ENCODE measurements at regions of chr2 and their contacts with region 1.

Region 1: DNA sequence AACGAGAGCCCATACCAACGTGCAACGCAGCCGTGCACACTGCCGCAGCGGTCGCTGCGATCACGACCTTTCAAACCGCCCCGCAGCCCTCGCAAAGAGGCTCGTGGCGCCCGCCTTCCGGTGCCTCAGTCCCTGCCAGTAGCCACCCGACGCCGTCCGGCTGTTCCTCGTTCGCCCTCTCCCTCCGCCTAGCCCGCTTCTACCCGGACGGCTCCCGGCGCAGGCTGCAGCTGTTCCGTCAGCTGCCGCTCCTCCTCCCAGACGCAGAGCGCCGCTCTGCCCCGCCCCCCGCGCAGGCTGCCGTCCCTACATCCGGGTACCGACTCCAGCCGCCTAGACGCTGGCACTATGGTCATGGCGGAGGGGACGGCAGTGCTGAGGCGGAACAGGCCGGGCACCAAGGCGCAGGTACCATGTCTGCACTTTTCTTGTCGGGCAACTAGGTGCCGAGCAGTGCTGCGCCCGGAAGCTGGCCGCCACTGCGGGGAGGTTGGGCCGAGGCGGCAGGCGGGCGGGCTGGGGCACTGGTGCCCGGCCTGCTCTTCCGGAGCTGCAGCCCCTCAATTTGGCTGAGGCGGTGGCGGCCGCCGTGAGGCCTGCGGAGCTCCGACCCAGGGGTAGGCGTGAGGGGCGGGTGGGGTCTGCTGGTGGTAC is at the start of gene MOB4:
- DNase-seq: peak; percentile 99
- H3K4me3 Mint-ChIP-seq: peak within 1 kb of the TSS; percentile 94
- H3K27ac Mint-ChIP-seq: peak within 1 kb of the TSS; percentile 91
- H3K4me1 Mint-ChIP-seq: peaks cover 21% of the 10 kb centered on the region
- H3K27me3 Mint-ChIP-seq: no peaks in the 10 kb centered on the region
- total RNA-seq, gene MOB4: 19.2 and 22.6 TPM in 2 replicates

Region 2: DNA sequence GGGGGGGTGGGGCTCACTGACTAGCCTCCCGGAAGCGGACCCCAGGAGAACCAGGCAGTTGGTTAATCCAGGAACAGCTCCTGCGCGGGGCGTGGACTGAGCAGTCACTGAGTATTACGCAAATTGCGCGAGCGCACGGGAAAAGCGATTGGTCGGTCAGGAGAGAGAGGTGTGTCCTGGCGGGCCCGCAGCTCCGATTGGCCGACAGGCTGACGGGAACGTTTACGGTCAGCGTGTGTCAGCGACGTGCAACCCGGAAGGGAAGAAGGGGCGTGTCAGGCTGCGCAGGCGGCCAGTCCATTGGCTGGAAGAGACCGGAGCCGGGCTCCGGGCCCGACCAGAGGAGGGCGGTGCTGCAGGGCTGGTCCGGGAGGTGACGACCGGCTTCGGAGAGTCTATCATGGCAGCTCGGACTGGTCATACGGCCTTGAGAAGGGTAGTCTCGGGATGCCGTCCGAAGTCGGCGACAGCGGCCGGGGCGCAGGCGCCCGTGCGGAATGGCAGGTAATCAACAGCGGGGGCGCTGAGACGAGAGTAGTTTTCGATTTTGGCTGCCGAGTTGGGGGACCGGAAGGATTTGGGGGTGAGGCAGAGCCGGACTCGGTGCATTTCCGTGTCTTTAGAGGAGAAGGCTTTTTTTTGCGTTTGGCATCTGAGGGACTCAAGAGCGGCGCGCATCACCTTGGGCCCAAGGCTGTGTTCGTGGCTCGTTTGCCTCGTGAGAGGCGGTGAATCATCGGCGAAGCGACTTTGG is 62.5 kb before region 1 on chr2 and contains the start of gene COQ10B:
- intact Hi-C with region 1: loop called (anchors 1 kb)
- DNase-seq: peak; percentile 100
- H3K4me3 Mint-ChIP-seq: peak within 1 kb of the TSS; percentile 100
- H3K27ac Mint-ChIP-seq: peak within 1 kb of the TSS; percentile 100
- H3K4me1 Mint-ChIP-seq: peaks cover 26% of the 10 kb centered on the region
- H3K27me3 Mint-ChIP-seq: no peaks in the 10 kb centered on the region
- total RNA-seq, gene COQ10B: 20.1 TPM in 2 replicates

Region 3: GRCh38 chr2:197499594-197500526 is 16.0 kb before region 1 on chr2 and contains the starts of genes HSPD1 and HSPE1:
- intact Hi-C with region 1: loop called (anchors 1 kb)
- DNase-seq: peak; percentile 99
- H3K4me3 Mint-ChIP-seq: peak within 1 kb of the TSS; percentile 95
- H3K27ac Mint-ChIP-seq: peak within 1 kb of the TSS; percentile 98
- H3K4me1 Mint-ChIP-seq: peaks cover 41% of the 10 kb centered on the region
- H3K27me3 Mint-ChIP-seq: no peaks in the 10 kb centered on the region
- total RNA-seq, gene HSPD1: 984 and 999 TPM in 2 replicates
- total RNA-seq, gene HSPE1: 409 and 411 TPM in 2 replicates

Region 4: GRCh38 chr2:197538412-197538811 is 22.5 kb after region 1 on chr2:
- intact Hi-C with region 1: loop called (anchors 2 kb)
- DNase-seq: no peak
- H3K4me3 Mint-ChIP-seq: no peak overlapping the region
- H3K27ac Mint-ChIP-seq: no peak overlapping the region
- H3K4me1 Mint-ChIP-seq: peaks cover 17% of the 10 kb centered on the region
- H3K27me3 Mint-ChIP-seq: no peaks in the 10 kb centered on the region

Region 5: GRCh38 chr2:197777823-197778407 is 262.0 kb after region 1 on chr2:
- intact Hi-C with region 1: loop called (anchors 10 kb)
- DNase-seq: peak; percentile 77
- H3K4me3 Mint-ChIP-seq: no peak overlapping the region
- H3K27ac Mint-ChIP-seq: no peak overlapping the region
- H3K4me1 Mint-ChIP-seq: no peaks in the 10 kb centered on the region
- H3K27me3 Mint-ChIP-seq: peaks cover 19% of the 10 kb centered on the region

Region 6: GRCh38 chr2:198452327-198452726 is 936.5 kb after region 1 on chr2:
- intact Hi-C with region 1: no loop called
- DNase-seq: no peak
- H3K4me3 Mint-ChIP-seq: no peak overlapping the region
- H3K27ac Mint-ChIP-seq: no peak overlapping the region
- H3K4me1 Mint-ChIP-seq: no peaks in the 10 kb centered on the region
- H3K27me3 Mint-ChIP-seq: no peaks in the 10 kb centered on the region

Measured in activated CD4-positive, alpha-beta T cell treated with anti-CD3 and anti-CD28 coated beads, Interleukin-2, amount 10 ng/mL, durations not matched to agents 24 days and 14 days (primary cell).